A549 (cell line): ENCODE measurements at regions of chr16 and their contacts with region 1.

Region 1: GRCh38 chr16:66711581-66711980 is 15.0 kb upstream of the CMTM4 start:
- DNase-seq: no peak
- ATAC-seq: no peak
- H3K4me3 ChIP-seq: no peak overlapping the region
- H3K27ac ChIP-seq: no peak overlapping the region
- H3K4me1 ChIP-seq: no peaks in the 10 kb centered on the region
- CTCF ChIP-seq: no peak
- EP300 ChIP-seq: no peak
- POLR2A ChIP-seq: no peak
- RAD21 ChIP-seq: no peak

Region 2: DNA sequence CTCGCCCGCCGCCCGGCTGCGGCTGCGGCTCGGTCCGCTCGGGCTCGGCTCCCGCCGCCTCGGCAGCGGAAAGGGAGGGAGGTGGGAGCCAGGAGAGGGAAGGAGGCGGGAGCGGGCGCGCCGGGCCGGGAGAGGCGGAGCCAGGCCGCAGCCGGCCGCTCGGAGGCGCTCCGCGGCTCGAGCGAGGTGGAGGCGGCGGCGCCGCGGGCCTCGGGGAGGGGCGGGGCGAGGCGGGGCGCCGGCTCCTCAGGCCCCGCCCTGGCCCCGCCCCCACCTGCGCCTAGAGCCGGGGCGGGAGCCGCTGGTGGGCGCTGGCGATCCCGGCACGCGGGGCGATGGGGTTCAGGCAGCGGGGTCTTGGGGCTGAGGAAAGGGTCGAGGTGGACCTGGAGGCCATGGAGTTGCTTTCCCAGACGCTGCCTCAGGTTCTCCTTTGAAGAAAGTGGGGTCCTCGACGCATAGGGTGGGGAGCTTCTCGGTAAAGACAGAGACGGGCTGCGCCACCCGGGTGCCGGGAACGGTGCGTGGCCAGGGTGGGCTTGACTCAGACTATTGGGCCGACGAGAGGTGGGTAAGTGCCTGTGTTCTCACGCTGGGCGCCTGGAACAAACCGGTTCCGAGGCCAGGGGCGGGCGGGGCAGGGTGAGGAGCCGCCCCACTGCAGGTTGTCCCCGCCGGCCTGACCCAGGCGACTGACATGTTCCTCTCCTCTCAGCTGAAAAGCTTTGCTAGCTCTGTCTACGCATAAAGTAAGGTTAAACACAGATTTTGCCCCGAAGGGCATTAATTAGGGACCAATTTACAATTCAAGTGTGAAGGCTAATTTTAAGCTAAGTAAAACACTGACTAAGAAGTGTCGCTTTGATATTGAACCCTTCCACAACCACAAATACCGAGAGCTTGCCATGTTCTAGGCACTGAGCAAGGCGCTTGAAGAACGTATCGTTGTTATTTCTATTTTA is 14.6 kb before region 1 on chr16 and contains the start of gene CMTM4:
- CTCF ChIA-PET with region 1: interaction called, 15 read pairs
- POLR2A ChIA-PET with region 1: no interaction called
- DNase-seq: peak; percentile 81 to 84
- ATAC-seq: peak; percentile 89 to 93
- H3K4me3 ChIP-seq: peak within 1 kb of the TSS; percentile 79
- H3K27ac ChIP-seq: peak within 1 kb of the TSS; percentile 79 to 93
- H3K4me1 ChIP-seq: peaks cover 29% of the 10 kb centered on the region
- CTCF ChIP-seq: peak; percentile 56
- EP300 ChIP-seq: no peak
- POLR2A ChIP-seq: peak; percentile 25; the same call in 1 of the 2 replicates
- RAD21 ChIP-seq: no peak
- polyA plus RNA-seq, gene CMTM4: 58.6 and 61.6 TPM in 2 replicates